ENCODE measurements at regions of chr10 and their contacts with region 1.

Region 1: DNA sequence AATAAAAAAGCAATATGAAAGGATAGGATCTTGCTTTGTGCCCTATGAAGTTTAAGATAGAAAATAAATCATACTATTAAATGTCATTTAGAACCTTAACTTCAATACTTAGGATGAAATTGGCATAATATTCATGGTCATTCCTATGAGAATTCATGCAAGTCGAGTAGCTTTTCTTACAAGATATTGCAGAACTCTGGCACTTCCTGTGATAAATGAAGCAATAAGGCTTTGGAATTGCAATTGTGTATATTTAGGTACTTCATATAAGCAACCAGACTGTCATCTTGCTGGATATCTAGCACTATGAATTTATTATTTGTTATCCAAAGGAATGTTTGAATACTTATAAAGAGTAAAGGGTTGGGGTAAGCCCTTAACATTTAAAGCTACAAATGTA is 116.5 kb downstream of the ZNF438 start:
- DNase-seq: peak; percentile 25 to 63 (median 61)
- H3K4me3 ChIP-seq: peak overlapping the region in 1 of 3 experiments; percentile 16
- H3K4me3 Mint-ChIP-seq: no peak overlapping the region
- H3K27ac ChIP-seq: peak overlapping the region in 1 of 2 donors; percentile 14
- H3K27ac Mint-ChIP-seq: no peak overlapping the region
- H3K4me1 ChIP-seq: peaks cover 7 to 17% of the 10 kb centered on the region in 2 donors
- H3K4me1 Mint-ChIP-seq: peaks cover 12% of the 10 kb centered on the region
- H3K27me3 ChIP-seq: no peaks in the 10 kb centered on the region
- H3K27me3 Mint-ChIP-seq: no peaks in the 10 kb centered on the region
- CTCF ChIP-seq: no peak

Region 2: DNA sequence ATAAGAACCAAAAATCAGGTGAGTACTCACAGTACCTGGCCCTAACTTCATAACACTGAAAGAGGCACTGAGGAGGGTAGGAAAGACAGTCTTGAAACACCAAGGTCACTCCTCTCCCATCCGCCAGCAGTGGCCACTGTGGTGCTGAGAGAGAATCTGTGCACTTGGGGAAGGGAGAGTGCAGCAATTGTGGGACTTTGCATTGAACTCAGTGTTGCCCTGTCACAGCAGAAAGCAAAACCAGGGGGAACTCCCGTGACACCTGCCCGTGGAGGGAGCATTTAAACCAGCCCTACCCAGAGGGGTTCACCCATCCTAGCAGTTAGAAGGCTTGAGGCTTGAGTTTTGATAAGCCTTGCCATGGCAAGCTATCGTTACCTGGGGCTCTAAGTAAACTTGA is 516.4 kb before region 1 on chr10:
- intact Hi-C with region 1: no loop called
- DNase-seq: no peak
- H3K4me3 ChIP-seq: no peak overlapping the region
- H3K4me3 Mint-ChIP-seq: no peak overlapping the region
- H3K27ac ChIP-seq: no peak overlapping the region
- H3K27ac Mint-ChIP-seq: no peak overlapping the region
- H3K4me1 ChIP-seq: peaks cover 23 to 37% of the 10 kb centered on the region in 2 donors
- H3K4me1 Mint-ChIP-seq: peaks cover 35% of the 10 kb centered on the region
- H3K27me3 ChIP-seq: no peaks in the 10 kb centered on the region
- H3K27me3 Mint-ChIP-seq: peaks cover 0 to 2% (median 0%) of the 10 kb centered on the region in 3 donors
- CTCF ChIP-seq: no peak

Region 3: DNA sequence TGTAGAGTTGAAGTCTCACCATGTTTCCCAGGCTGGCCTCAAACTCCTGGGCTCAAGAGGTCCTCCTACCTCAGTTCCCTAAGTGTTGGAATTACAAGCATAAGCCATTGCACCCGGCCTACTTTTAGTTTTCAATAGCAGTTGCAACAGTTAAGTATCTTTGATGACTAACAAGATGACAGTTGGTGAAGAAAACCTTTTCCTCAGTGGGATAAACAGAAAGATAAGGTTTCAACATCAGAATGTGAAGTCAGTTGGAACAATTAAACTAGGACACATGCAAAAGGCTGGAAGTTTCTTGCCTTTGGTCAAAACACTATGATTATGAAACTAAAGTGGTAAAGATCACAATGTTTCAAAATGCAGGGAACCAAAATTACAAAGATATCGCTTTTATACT is 52.7 kb before region 1 on chr10:
- intact Hi-C with region 1: loop called in 1 of 2 experiments (anchors 10 kb)
- DNase-seq: peak in 1 of 3 donors; percentile 10
- H3K4me3 ChIP-seq: no peak overlapping the region
- H3K4me3 Mint-ChIP-seq: no peak overlapping the region
- H3K27ac ChIP-seq: peak overlapping the region in 1 of 2 donors; percentile 57
- H3K27ac Mint-ChIP-seq: peak overlapping the region in 6 of 7 donors; percentile 5 to 85 (median 50)
- H3K4me1 ChIP-seq: peaks cover 56 to 71% of the 10 kb centered on the region in 2 donors
- H3K4me1 Mint-ChIP-seq: peaks cover 80% of the 10 kb centered on the region
- H3K27me3 ChIP-seq: no peaks in the 10 kb centered on the region
- H3K27me3 Mint-ChIP-seq: no peaks in the 10 kb centered on the region
- CTCF ChIP-seq: no peak

Region 4: DNA sequence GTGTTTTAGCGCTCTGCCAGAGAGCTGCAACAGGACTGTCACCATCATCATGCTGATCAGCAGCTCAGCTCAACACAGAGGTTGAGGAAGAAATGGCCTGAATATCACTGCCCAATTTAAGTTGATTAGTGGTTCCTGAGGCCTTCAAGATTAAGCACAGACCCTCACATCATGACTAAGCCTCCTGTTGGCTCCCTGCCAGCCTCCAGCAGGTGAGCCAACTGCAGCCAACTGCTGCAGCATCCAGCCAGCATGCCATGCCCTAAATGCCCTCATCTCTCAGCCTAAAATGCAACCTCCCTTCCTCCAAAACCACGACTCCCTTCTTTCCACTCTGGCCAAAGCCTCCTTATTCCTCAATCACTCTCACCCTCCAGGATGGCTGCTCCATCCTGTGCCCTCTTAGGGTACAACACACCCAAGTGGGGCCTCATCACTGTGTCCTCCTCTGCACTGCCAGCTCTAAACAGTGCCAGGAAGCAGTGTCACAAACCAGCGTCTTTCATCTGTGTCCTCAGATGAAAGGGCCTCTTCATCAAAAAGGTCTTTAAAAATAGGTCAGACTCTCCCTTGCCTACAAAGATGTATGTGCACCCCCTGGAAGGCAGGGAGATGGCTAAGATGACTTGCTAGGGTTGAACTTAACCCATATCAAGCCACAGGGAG is 663.2 kb after region 1 on chr10:
- intact Hi-C with region 1: no loop called
- DNase-seq: no peak
- H3K4me3 ChIP-seq: no peak overlapping the region
- H3K4me3 Mint-ChIP-seq: no peak overlapping the region
- H3K27ac ChIP-seq: no peak overlapping the region
- H3K27ac Mint-ChIP-seq: peak overlapping the region in 1 of 7 donors; percentile 51
- H3K4me1 ChIP-seq: peaks cover 34 to 35% of the 10 kb centered on the region in 2 donors
- H3K4me1 Mint-ChIP-seq: peaks cover 34% of the 10 kb centered on the region
- H3K27me3 ChIP-seq: no peaks in the 10 kb centered on the region
- H3K27me3 Mint-ChIP-seq: peaks cover 0 to 3% (median 0%) of the 10 kb centered on the region in 3 donors
- CTCF ChIP-seq: no peak